ENCODE measurements at regions of chr4 and their contacts with region 1.

Region 1: DNA sequence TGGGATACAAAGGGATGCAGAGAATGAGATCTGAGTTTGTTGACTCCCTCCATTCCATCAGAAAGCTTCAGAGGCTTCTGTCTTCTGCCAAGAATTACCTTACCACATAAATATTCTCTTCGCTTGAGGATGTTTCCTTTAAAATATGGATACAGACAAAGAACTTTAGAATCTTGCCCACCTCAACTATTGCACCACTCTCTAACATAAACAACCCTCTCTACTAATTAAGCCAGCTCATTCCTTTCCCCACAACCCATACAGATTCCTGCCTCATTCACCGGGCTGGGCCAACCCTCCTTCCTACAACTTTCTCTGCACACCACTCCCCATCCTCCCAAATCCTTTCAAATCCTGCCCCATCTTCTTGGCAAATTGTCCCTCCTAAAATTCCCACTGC is 315.8 kb downstream of the RAB28 start:
- DNase-seq: no peak

Region 2: GRCh38 chr4:13126976-13127910 is 41.1 kb before region 1 on chr4:
- intact Hi-C with region 1: no loop called
- DNase-seq: no peak

Region 3: DNA sequence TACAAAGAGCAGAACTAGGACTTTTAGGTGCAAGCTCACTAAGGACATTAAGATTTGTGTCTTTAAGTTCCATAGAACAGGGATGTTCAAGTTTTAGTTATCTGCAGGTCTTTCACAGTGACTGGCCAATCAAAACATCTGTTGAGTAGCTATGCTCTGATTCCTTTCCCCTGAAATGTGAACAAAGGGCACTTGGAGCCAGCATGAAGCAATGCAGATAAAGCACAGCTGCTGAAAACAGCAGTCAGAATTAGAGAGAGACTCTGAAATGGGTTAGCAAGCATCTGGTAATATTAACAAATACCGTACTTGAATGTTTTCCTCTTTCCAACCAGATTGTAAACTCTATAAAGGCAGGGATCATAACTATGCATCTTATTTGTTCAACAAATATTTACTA is 38.9 kb after region 1 on chr4:
- intact Hi-C with region 1: loop called in 1 of 2 experiments (anchors 1 kb)
- DNase-seq: no peak

Measured in posterior vena cava (tissue), 2 donors.